ENCODE measurements at regions of chr17 and their contacts with region 1.

Region 1: DNA sequence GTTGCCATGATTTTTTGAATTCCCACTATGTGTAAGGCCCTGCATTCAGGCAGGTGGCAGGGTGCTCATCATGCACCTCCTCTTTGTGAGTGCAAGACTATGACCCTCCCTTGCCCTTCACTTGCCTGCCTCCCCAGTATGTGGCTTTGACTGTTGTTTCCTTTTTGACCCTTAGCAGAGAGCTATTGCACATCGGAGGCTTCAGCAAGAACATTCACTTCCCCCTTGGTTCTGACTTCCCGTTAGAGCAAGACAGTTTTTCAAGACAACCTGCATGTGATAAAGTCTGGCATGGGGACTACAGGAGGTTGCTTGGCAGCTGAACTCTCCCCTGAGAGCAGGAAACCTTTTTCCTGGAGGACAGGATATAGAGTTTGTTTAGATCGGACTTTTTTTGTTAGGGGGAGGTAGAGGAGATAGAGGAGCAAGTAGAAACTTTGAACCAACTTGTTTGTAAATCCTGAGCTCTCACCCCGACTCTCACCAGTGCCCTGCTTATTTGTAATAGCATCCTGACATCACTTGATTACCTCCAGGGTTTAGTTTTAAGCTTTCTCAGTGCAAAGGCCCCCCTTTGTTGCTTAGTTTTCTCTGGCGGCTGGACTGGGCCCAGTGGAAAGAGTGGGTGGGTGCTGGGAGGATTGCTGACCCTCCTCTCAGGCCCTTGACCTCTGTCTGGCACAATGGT is 34.3 kb downstream of the LIMD2 start:
- DNase-seq: no peak
- ATAC-seq: peak; percentile 71
- H3K4me3 Mint-ChIP-seq: peak overlapping the region; percentile 68
- H3K27ac Mint-ChIP-seq: peak overlapping the region; percentile 95
- H3K4me1 Mint-ChIP-seq: peaks cover 44% of the 10 kb centered on the region
- H3K27me3 Mint-ChIP-seq: no peaks in the 10 kb centered on the region
- CTCF ChIP-seq: no peak

Region 2: GRCh38 chr17:63564562-63564961 is 101.1 kb before region 1 on chr17:
- CTCF ChIA-PET with region 1: no interaction called
- POLR2A ChIA-PET with region 1: no interaction called
- intact Hi-C with region 1: no loop called
- DNase-seq: no peak
- ATAC-seq: no peak
- H3K4me3 Mint-ChIP-seq: no peak overlapping the region
- H3K27ac Mint-ChIP-seq: no peak overlapping the region
- H3K4me1 Mint-ChIP-seq: peaks cover 29% of the 10 kb centered on the region
- H3K27me3 Mint-ChIP-seq: no peaks in the 10 kb centered on the region
- CTCF ChIP-seq: no peak

Region 3: GRCh38 chr17:63639125-63639524 is 26.5 kb before region 1 on chr17:
- CTCF ChIA-PET with region 1: no interaction called
- POLR2A ChIA-PET with region 1: no interaction called
- intact Hi-C with region 1: no loop called
- DNase-seq: no peak
- ATAC-seq: no peak
- H3K4me3 Mint-ChIP-seq: no peak overlapping the region
- H3K27ac Mint-ChIP-seq: no peak overlapping the region
- H3K4me1 Mint-ChIP-seq: peaks cover 16% of the 10 kb centered on the region
- H3K27me3 Mint-ChIP-seq: no peaks in the 10 kb centered on the region
- CTCF ChIP-seq: no peak

Region 4: GRCh38 chr17:63675607-63676413 is 10.1 kb after region 1 on chr17:
- CTCF ChIA-PET with region 1: interaction called, 6 read pairs
- POLR2A ChIA-PET with region 1: interaction called, 11 read pairs
- intact Hi-C with region 1: no loop called
- DNase-seq: no peak
- ATAC-seq: no peak
- H3K4me3 Mint-ChIP-seq: no peak overlapping the region
- H3K27ac Mint-ChIP-seq: no peak overlapping the region
- H3K4me1 Mint-ChIP-seq: peaks cover 5% of the 10 kb centered on the region
- H3K27me3 Mint-ChIP-seq: no peaks in the 10 kb centered on the region
- CTCF ChIP-seq: no peak

Measured in activated B cell treated with CpG ODN at 0.5 μM for 24 hours (primary cell).